ENCODE measurements at regions of chr15 and their contacts with region 1.

Region 1: GRCh38 chr15:38563723-38564519 is 693 bp downstream of the RASGRP1 start:
- DNase-seq: peak; percentile 87
- ATAC-seq: peak; percentile 78
- H3K4me3 Mint-ChIP-seq: peak overlapping the region; percentile 90
- H3K27ac Mint-ChIP-seq: peak overlapping the region; percentile 88
- H3K4me1 Mint-ChIP-seq: peaks cover 50% of the 10 kb centered on the region
- H3K27me3 Mint-ChIP-seq: no peaks in the 10 kb centered on the region
- CTCF ChIP-seq: no peak

Region 2: GRCh38 chr15:38440353-38441129 is 123.4 kb before region 1 on chr15:
- CTCF ChIA-PET with region 1: interaction called, 17 read pairs
- POLR2A ChIA-PET with region 1: interaction called, 7 read pairs
- intact Hi-C with region 1: no loop called
- DNase-seq: no peak
- ATAC-seq: peak; percentile 96
- H3K4me3 Mint-ChIP-seq: no peak overlapping the region
- H3K27ac Mint-ChIP-seq: no peak overlapping the region
- H3K4me1 Mint-ChIP-seq: peaks cover 5% of the 10 kb centered on the region
- H3K27me3 Mint-ChIP-seq: peaks cover 34% of the 10 kb centered on the region
- CTCF ChIP-seq: peak; percentile 64

Region 3: DNA sequence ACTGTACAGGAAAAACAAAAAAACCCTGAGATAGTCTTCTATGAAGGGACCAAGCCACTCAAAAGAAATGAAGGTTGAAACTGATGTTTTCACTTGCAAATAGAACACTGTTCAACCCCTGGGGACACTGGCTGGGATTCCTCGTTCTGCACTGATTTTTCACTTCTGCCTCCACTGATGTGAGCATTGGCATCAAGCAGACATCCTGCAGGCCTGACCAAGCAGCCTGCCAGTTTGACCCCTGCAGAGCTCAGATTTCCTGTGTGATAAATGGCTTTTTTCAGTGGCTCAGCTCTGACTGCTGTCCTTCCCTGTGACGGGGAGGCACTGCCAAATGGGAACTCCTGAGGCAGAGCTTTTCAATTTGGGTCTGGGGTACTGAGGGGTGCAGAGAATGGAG is 49.3 kb before region 1 on chr15:
- CTCF ChIA-PET with region 1: interaction called, 10 read pairs
- POLR2A ChIA-PET with region 1: interaction called, 3 read pairs
- intact Hi-C with region 1: loop called (anchors 5 kb)
- DNase-seq: no peak
- ATAC-seq: peak; percentile 88
- H3K4me3 Mint-ChIP-seq: no peak overlapping the region
- H3K27ac Mint-ChIP-seq: peak overlapping the region; percentile 2
- H3K4me1 Mint-ChIP-seq: peaks cover 16% of the 10 kb centered on the region
- H3K27me3 Mint-ChIP-seq: no peaks in the 10 kb centered on the region
- CTCF ChIP-seq: no peak

Region 4: DNA sequence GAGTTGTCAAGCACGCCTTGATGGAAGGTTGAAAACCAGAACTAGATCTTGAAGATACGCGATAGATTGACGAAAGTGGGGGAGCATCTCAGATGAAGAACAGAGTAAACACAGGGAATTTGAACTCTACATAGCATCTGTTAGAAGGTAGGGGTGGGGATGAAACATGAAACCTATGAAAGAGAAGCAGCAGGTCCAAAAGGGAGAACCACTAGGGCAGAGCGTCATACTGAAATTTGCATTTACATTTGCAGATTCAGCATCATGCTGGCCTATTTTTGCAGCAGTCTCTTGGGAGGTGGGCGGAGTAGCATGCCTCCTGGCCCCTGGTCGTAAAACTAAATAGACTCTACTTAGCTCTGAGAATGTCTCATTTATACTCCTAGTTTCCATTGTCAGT is 46.8 kb after region 1 on chr15:
- CTCF ChIA-PET with region 1: interaction called, 6 read pairs
- POLR2A ChIA-PET with region 1: interaction called, 8 read pairs
- intact Hi-C with region 1: loop called (anchors 2 kb)
- DNase-seq: peak; percentile 20
- ATAC-seq: peak; percentile 98
- H3K4me3 Mint-ChIP-seq: peak overlapping the region; percentile 11
- H3K27ac Mint-ChIP-seq: peak overlapping the region; percentile 13
- H3K4me1 Mint-ChIP-seq: peaks cover 35% of the 10 kb centered on the region
- H3K27me3 Mint-ChIP-seq: no peaks in the 10 kb centered on the region
- CTCF ChIP-seq: no peak

Region 5: DNA sequence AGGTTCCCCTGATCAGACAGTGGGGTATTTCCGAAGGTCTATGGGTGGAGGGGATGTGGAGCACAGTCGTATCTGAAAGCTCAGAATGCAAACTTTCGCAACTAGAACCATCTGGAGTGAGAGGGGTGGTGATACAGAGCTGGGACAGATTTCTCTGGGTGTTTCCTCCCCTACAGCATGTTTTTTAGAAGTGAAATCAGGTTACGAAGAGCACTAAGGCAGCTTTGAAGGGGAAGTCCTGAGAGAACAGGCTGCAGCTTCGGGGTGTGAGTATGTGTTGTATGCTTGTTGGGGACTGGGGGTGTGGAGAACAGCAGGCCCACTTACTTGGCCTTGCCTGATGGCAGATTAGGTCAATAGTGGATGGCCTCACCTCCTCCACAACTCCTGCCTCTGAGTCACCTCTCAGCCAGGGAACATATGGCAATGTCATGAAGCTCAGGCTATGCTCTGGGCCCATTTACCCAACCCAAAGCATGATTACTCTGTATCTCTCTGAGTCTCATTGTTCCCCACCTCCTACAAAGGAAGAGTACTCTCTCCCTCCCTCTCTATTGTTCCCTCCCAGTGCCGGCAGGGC is 107.8 kb after region 1 on chr15:
- CTCF ChIA-PET with region 1: interaction called, 68 read pairs
- POLR2A ChIA-PET with region 1: interaction called, 86 read pairs
- intact Hi-C with region 1: loop called (anchors 1 kb)
- DNase-seq: peak; percentile 22
- ATAC-seq: peak; percentile 66
- H3K4me3 Mint-ChIP-seq: peak overlapping the region; percentile 65
- H3K27ac Mint-ChIP-seq: peak overlapping the region; percentile 94
- H3K4me1 Mint-ChIP-seq: peaks cover 78% of the 10 kb centered on the region
- H3K27me3 Mint-ChIP-seq: no peaks in the 10 kb centered on the region
- CTCF ChIP-seq: no peak

Region 6: DNA sequence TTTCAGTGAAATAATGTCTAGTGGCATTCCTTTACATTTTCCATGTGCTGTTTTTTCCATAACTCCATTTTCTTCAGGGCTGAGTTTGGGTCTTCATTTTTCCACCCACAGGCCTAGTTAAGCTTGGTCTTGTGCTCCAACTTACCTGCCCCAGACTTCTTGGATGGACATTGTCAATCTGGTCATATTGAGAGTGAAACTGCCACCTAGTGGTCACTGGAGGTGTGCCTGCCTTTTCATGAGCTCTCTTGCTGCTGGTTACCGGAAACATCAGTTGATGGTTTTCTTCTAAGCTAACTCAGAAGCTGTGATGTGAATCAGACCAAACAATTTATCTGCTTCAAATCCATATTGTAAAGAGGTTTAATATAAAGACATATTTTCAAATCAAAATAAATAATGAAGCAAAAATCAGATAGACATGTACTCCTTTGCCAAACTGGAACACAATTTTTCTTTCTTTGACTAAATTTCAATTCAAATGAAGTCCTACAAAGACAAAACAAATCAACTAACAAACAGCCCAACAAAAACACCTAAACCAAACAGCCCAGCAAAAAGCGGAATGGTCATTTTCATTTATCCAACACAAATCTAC is 135.8 kb after region 1 on chr15:
- CTCF ChIA-PET with region 1: interaction called, 17 read pairs
- POLR2A ChIA-PET with region 1: no interaction called
- intact Hi-C with region 1: no loop called
- DNase-seq: no peak
- ATAC-seq: peak; percentile 88
- H3K4me3 Mint-ChIP-seq: no peak overlapping the region
- H3K27ac Mint-ChIP-seq: no peak overlapping the region
- H3K4me1 Mint-ChIP-seq: no peaks in the 10 kb centered on the region
- H3K27me3 Mint-ChIP-seq: no peaks in the 10 kb centered on the region
- CTCF ChIP-seq: no peak